SK-N-SH (cell line): ENCODE measurements at regions of chr11 and their contacts with region 1.

Region 1: DNA sequence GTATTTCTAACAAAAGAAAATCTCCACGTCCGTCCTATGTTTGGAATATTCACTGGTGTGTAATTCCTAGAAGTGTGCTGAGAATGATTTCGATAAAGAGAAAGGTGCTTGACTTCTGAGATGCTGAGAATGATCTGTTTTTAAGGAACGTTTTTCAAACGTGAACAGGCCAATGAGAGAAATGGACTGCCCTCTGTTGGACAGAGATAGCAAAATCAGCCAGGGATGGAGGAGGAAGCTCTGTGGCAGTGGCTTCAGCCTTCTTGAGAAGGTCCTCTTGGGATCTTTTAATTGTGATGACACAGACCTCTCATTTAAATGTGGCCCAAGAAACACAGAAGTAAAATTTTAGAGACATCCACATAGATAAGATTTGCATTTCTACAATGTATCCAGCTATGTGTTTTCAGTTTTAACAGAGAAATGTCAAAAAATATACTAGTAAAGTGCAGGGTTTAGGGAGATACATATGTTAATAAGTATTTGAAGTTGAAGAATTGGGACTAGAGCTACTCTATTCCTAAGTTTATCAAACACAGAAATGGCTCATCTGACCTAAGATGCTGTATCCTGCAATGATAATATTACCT is 84.0 kb upstream of the RCN1 start:
- DNase-seq: peak; percentile 42
- H3K4me3 ChIP-seq: no peak overlapping the region
- H3K27ac ChIP-seq: no peak overlapping the region
- H3K4me1 ChIP-seq: no peaks in the 10 kb centered on the region; a peak in 2 of 4 replicates
- H3K27me3 ChIP-seq: peaks cover 28% of the 10 kb centered on the region; the same call in 1 of the 2 replicates
- CTCF ChIP-seq: peak; percentile 79
- EP300 ChIP-seq: no peak
- RAD21 ChIP-seq: peak; percentile 73

Region 2: DNA sequence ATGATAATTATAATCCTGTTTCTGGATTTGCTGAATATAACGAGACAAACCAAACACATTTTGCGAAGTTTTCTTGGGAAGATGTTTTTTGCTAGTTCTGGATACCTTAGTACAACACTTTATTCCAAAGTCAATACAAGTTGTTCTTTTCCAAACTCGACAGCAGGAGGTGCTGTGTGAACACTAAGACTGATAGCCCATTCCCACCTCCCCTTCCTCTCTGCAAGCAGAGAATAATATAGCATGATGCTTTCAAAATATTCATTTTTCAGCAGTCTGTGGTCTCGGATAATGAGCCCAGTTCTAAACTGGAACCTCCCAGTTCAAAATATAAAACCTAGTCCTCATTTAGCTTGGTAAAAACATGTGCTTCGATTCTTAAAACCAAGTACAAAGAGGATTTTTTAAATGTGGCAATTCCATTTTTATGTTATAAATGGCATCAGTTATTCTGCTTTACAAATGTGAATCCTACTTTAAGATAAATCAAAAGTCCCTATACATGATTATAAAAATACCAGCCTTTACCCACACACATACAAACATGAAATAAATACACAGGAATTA is 766.5 kb before region 1 on chr11:
- CTCF ChIA-PET with region 1: interaction called, 20 read pairs
- POLR2A ChIA-PET with region 1: no interaction called
- DNase-seq: peak; percentile 14
- H3K4me3 ChIP-seq: no peak overlapping the region; a peak in 1 of 4 replicates
- H3K27ac ChIP-seq: no peak overlapping the region
- H3K4me1 ChIP-seq: peaks cover 0 to 14% of the 10 kb centered on the region in 2 experiments; a peak in 1 of 4 replicates
- H3K27me3 ChIP-seq: no peaks in the 10 kb centered on the region
- CTCF ChIP-seq: peak; percentile 70
- EP300 ChIP-seq: no peak
- RAD21 ChIP-seq: peak; percentile 78

Region 3: DNA sequence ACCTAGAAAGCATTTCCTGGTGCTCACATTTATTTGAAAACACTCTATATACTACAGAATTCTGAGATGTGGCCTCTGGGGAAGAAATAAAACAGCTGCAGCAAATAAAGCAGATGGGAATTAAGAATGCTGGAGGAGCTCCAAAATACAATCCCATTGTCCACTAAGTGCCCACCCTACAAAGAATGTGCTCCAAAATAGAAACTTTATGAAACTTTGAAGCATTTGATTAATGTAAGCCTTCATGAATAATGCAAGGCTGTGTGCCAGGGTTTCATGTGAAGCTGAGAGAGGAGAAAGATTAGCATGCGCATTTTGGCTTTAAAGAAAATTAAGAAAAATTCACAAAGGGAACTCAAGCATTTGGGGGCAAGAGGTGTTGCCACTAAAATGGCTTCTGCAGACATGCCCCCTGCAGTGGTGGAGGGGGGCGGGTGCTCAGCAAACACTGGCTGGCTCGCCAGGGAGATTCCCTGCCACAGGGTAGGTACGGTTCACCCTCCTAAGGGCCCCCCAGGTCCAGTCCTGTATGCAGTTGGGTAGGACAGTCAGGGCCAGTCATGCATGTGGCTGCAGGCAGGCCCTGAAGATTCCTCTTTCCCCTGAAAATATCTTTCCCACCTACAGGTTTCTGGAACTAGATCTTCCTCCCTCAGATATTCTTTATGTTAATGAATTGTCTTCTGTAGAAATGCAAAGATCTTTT is 37.4 kb after region 1 on chr11:
- CTCF ChIA-PET with region 1: no interaction called
- POLR2A ChIA-PET with region 1: no interaction called
- DNase-seq: no peak
- H3K4me3 ChIP-seq: no peak overlapping the region
- H3K27ac ChIP-seq: no peak overlapping the region
- H3K4me1 ChIP-seq: peaks cover 0 to 15% of the 10 kb centered on the region in 2 experiments; a peak in 1 of 4 replicates
- H3K27me3 ChIP-seq: peaks cover 8% of the 10 kb centered on the region
- CTCF ChIP-seq: no peak
- EP300 ChIP-seq: no peak
- RAD21 ChIP-seq: no peak

Region 4: GRCh38 chr11:32062540-32062939 is 55.6 kb after region 1 on chr11:
- CTCF ChIA-PET with region 1: no interaction called
- POLR2A ChIA-PET with region 1: no interaction called
- DNase-seq: no peak
- H3K4me3 ChIP-seq: no peak overlapping the region
- H3K27ac ChIP-seq: no peak overlapping the region
- H3K4me1 ChIP-seq: no peaks in the 10 kb centered on the region
- H3K27me3 ChIP-seq: peaks cover 67% of the 10 kb centered on the region
- CTCF ChIP-seq: no peak
- EP300 ChIP-seq: no peak
- RAD21 ChIP-seq: no peak